Right ventricle myocardium superior (tissue), 1 donor: ENCODE measurements at regions of chr1 and their contacts with region 1.

Region 1: GRCh38 chr1:12619792-12620487 is 1.9 kb upstream of the DHRS3 start:
- DNase-seq: peak; percentile 91
- ATAC-seq: peak; percentile 57

Region 2: DNA sequence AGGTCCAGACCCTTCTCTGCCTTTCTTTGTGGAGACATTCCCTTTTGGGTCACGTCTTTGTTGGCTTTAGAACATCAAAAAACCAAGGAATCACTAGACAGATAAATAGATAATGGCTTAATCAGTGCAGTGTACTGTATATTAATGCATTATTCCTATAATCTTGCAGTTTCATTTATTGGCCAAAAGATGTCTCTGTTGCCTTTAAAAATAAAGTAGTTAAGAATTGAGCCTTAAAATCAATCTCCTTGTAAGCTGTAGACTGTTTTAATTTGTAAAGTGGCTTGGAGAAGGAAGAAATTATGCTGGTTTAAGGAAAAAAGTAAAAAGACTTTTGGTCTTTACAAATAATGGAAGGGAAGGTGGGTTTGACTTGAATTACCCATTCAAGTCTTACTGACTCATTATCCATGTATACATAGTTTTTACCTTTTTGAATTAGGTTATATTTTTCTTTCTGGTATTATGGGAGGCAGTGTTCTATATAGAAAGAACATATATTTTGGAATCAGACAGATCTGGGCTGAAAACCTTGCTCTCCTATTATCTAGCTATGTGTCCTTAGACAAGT is 305.5 kb before region 1 on chr1:
- intact Hi-C with region 1: loop called (anchors 10 kb)
- DNase-seq: no peak
- ATAC-seq: peak; percentile 58

Region 3: GRCh38 chr1:12407050-12407961 is 212.6 kb before region 1 on chr1:
- intact Hi-C with region 1: loop called (anchors 5 kb)
- DNase-seq: no peak
- ATAC-seq: peak; percentile 69

Region 4: GRCh38 chr1:12477936-12478611 is 141.9 kb before region 1 on chr1:
- intact Hi-C with region 1: loop called (anchors 5 kb)
- DNase-seq: peak; percentile 88
- ATAC-seq: peak; percentile 65